HCT116 (cell line): ENCODE measurements at regions of chr12 and their contacts with region 1.

Region 1: DNA sequence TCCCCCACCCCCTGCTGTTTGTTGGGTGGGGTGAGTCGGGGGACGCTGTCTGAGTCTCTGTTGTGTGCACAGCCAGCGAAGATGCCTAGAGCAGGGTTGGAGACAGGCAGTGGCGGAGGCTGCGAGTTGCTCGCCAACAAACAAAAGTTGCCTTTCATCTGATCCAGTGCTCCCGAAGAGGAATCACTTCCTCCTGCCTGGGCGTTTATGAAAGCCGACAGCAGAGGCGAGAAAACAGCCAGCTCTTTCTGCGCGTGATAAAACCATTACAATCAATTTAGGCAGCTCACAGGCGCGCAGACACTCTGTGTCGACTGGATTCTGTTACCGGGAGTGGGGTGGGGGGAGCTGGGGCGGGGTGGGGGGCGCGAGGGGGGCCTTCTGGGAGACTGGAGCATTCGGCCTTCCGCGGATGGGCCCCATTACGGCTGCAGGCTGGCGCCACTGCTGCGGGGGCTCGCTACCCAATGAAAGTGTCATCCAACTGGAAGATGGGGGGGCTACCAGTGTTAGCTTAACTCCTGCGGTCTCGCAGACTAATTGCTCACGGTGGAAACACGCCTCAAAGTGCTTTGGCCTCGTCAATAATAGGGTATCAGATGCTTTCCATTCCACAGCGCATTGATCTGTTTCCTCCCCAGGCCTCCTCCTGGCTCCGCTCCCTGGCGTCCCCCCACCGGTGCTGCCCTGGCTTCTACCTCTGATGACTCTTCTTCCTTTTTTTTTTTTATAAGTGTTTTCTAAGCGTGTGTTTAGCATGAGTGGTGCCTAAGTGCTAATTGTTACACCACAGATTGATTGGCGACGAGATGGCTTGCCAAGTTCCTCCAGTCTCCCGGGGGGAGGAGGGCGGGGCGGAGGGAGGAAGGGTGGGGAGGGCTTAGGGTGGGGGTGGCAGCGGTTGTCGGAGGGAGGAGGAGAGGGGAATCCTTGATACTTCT is 678.4 kb downstream of the MED13L start:
- DNase-seq: no peak
- ATAC-seq: no peak
- H3K4me3 ChIP-seq: no peak overlapping the region
- H3K27ac ChIP-seq: no peak overlapping the region
- H3K4me1 ChIP-seq: peaks cover 0 to 6% of the 10 kb centered on the region in 2 experiments; a peak in 2 of 4 replicates
- H3K27me3 ChIP-seq: no peaks in the 10 kb centered on the region
- CTCF ChIP-seq: no peak
- POLR2A ChIP-seq: no peak
- RAD21 ChIP-seq: no peak

Region 2: DNA sequence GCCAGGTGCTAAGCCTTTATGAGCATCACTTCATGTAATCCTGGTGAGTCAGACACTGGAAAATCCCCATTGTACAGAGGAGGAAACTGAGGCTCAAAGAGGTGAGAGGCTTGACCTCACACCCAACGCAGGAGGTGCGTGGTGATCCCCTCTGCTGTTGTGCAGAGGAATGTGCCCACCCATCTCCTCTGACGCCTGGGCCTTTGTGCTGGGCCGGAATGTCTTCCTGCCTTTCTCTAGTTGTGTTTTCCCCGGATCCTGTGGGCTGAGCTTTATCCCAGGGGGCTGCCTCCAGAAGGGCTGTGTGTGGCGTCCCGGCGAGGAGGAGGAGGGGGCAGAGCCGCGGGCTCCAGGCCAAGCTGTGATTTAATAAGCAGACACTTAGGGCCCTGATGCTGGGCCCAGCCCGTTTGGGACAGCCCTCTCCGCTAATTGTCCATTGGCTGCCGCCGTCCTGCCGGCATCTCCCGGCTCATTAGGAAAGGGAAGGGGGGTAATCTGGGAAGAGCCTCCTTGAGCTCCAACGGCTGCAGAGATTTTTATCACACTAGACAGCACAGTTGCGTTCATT is 24.7 kb after region 1 on chr12:
- CTCF ChIA-PET with region 1: no interaction called
- POLR2A ChIA-PET with region 1: no interaction called
- RAD21 ChIA-PET with region 1: no interaction called
- intact Hi-C with region 1: loop called (anchors 1 kb)
- DNase-seq: no peak
- ATAC-seq: no peak
- H3K4me3 ChIP-seq: no peak overlapping the region
- H3K27ac ChIP-seq: no peak overlapping the region
- H3K4me1 ChIP-seq: no peaks in the 10 kb centered on the region
- H3K27me3 ChIP-seq: no peaks in the 10 kb centered on the region
- CTCF ChIP-seq: no peak
- POLR2A ChIP-seq: no peak
- RAD21 ChIP-seq: no peak

Region 3: DNA sequence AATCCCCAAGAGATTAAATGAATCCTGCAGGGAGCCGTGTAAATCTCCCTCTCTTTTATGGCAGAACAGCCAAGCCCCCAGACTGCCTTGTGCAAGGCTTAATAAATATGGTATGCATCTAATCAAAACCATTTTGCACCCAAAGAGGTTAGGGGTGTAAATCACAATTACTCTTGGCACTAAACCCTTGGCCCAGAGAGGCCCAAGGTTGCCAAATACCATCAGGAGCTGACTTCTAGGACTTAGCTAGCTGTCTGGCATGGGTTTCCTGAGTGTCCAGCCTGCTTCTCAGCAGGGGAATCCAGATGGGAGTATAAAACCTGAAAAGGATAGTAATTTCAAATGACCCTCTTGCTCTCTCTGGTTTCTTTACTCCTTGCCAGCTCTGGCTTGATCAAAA is 68.0 kb after region 1 on chr12:
- CTCF ChIA-PET with region 1: no interaction called
- POLR2A ChIA-PET with region 1: no interaction called
- RAD21 ChIA-PET with region 1: no interaction called
- intact Hi-C with region 1: no loop called
- DNase-seq: no peak
- ATAC-seq: no peak
- H3K4me3 ChIP-seq: no peak overlapping the region
- H3K27ac ChIP-seq: no peak overlapping the region
- H3K4me1 ChIP-seq: no peaks in the 10 kb centered on the region
- H3K27me3 ChIP-seq: peaks cover 8% of the 10 kb centered on the region; the same call in 1 of the 2 replicates
- CTCF ChIP-seq: no peak
- POLR2A ChIP-seq: no peak
- RAD21 ChIP-seq: no peak